ENCODE measurements at regions of chrX and their contacts with region 1.

Region 1: DNA sequence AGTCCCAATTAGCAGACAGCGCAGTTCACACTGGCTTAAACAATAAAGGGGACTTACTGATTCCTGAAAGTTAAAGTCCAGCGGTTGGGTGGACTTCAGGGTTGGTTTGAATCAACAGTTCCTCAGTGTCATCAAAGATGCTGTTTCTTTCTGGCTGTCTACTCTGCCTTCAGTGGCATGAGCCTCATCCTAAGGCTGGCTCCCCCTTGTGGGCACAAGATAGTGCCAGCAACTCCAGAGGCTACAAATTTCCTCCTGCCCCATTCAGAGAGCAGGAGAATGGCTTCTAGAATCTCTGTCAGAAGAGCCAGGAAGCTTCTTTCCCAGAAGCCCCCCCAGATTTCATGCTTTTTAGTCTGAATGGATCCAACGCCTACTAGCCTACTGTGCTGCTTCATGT is 82.4 kb upstream of the MTM1 start:
- DNase-seq: peak; percentile 61
- ATAC-seq: peak; percentile 71; the same call in 1 of the 2 replicates
- H3K4me3 ChIP-seq: no peak overlapping the region
- H3K27ac ChIP-seq: no peak overlapping the region
- H3K4me1 ChIP-seq: peaks cover 14% of the 10 kb centered on the region
- H3K27me3 ChIP-seq: no peaks in the 10 kb centered on the region
- CTCF ChIP-seq: peak; percentile 78

Region 2: GRCh38 chrX:150049647-150050046 is 436.4 kb before region 1 on chrX:
- CTCF ChIA-PET with region 1: no interaction called
- POLR2A ChIA-PET with region 1: no interaction called
- intact Hi-C with region 1: loop called (anchors 10 kb)
- DNase-seq: no peak
- ATAC-seq: no peak; the same call in 1 of the 2 replicates
- H3K4me3 ChIP-seq: no peak overlapping the region
- H3K27ac ChIP-seq: no peak overlapping the region
- H3K4me1 ChIP-seq: peaks cover 30% of the 10 kb centered on the region
- H3K27me3 ChIP-seq: no peaks in the 10 kb centered on the region
- CTCF ChIP-seq: no peak

Region 3: GRCh38 chrX:150587585-150588503 is 101.8 kb after region 1 on chrX:
- CTCF ChIA-PET with region 1: no interaction called
- POLR2A ChIA-PET with region 1: no interaction called
- intact Hi-C with region 1: loop called (anchors 10 kb)
- DNase-seq: peak; percentile 50
- ATAC-seq: 0 out of 2 replicates have a peak, but pooled peaks have one; percentile 35
- H3K4me3 ChIP-seq: no peak overlapping the region
- H3K27ac ChIP-seq: no peak overlapping the region
- H3K4me1 ChIP-seq: peaks cover 7% of the 10 kb centered on the region; the same call in 1 of the 2 replicates
- H3K27me3 ChIP-seq: no peaks in the 10 kb centered on the region
- CTCF ChIP-seq: peak; percentile 80